HEK293T (cell line): ENCODE measurements at regions of chr7 and their contacts with region 1.

Region 1: GRCh38 chr7:130982160-130982638 is 248.2 kb upstream of the KLF14 start:
- DNase-seq: peak; percentile 36

Region 2: GRCh38 chr7:130904031-130904757 is 78.0 kb before region 1 on chr7:
- CTCF ChIA-PET with region 1: interaction called, 10 read pairs
- POLR2A ChIA-PET with region 1: no interaction called
- DNase-seq: no peak

Region 3: DNA sequence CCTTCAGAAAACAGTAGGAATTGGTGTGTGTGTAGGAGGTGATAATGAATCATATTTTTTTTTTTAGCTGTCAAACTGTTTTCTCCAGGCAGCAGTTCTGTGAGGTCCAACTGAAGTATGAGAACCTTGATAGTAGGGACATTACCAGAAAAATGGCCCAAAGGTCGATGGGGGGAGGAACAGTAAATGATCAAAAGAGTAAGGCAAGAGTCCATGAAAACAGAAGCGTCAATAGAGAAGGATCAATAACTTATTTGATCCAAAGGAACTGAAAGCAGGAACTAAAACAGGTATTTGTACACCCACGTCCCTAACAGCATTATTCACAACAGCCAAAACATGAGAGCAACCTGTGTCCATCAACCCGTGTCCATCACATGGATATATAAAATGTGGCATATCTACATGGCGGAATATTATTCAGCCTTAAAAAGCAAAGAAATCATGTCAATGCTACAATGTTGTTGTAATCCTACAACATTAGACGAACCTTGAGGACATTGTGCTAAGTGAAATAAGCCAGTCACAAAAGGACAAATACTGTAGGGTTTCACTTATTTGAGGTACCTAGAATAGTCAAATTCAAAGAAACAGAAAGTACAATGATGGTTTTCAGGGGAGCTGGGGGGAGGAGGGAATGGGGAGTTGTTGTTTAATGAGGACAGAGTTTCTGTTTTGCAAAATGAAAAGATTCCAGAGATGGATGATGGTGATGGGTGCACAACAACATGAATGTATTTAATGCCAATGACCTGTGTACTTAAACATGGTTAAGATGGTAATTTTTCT is 34.2 kb before region 1 on chr7:
- CTCF ChIA-PET with region 1: interaction called, 11 read pairs
- POLR2A ChIA-PET with region 1: no interaction called
- DNase-seq: no peak

Region 4: DNA sequence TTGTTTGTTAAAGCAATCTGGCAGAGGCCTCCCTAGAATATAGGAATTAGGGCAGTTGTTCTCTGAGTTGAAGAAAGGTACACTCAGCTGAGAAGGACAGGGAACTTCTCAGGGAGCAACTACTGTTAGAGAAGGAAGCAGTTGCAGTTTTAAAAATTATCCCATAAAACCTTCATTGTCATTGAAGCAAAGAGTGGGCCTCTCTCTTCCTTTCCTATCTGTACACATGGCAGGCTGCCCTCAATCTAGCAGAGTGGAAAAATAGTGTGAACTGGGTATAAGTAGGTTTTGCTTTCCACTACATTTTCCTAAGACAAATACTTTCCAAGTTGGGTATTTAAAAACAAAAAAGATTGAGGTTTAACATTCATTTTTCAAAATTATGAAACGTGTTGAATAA is 11.5 kb before region 1 on chr7:
- CTCF ChIA-PET with region 1: interaction called, 10 read pairs
- POLR2A ChIA-PET with region 1: no interaction called
- DNase-seq: no peak

Region 5: GRCh38 chr7:130996841-130997231 is 14.6 kb after region 1 on chr7:
- CTCF ChIA-PET with region 1: interaction called, 14 read pairs
- POLR2A ChIA-PET with region 1: no interaction called
- DNase-seq: no peak

Region 6: GRCh38 chr7:131124001-131124629 is 141.9 kb after region 1 on chr7:
- CTCF ChIA-PET with region 1: no interaction called
- POLR2A ChIA-PET with region 1: no interaction called
- DNase-seq: no peak